ENCODE measurements at regions of chrX and their contacts with region 1.

Region 1: DNA sequence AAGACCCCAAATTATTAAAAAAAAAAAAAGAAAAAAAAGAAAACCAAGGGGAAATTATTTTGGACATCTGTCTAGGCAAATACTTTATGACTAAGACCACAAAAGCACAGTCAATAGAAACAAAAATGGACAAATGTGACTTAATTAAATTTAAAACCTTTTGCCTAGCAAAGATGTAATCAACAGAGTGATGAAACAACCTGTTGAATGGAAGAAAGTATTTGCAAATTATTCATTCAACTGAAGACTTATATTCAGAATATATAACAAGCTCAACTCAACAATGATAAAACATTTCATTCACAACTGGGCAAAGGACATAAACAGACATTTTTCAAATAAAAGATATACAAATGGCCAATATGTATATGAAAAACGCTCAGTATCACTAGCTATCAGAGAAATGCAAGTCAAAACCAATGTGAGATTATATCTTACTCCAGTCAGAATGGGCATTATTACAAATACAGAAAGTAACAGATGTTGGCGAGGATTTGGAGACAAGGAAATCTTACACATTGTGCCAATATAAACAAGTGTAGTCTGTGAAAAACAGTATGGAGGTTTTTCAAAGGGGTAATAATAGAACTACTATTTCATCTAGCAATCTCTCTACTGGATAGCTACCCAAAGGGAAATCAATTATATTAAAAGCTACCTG is 67.1 kb downstream of the FAAH2 start:
- DNase-seq: no peak
- H3K4me3 ChIP-seq: no peak overlapping the region
- H3K27ac ChIP-seq: no peak overlapping the region
- H3K4me1 ChIP-seq: no peaks in the 10 kb centered on the region
- H3K27me3 ChIP-seq: no peaks in the 10 kb centered on the region
- CTCF ChIP-seq: no peak
- EP300 ChIP-seq: no peak
- POLR2A ChIP-seq: no peak

Region 2: DNA sequence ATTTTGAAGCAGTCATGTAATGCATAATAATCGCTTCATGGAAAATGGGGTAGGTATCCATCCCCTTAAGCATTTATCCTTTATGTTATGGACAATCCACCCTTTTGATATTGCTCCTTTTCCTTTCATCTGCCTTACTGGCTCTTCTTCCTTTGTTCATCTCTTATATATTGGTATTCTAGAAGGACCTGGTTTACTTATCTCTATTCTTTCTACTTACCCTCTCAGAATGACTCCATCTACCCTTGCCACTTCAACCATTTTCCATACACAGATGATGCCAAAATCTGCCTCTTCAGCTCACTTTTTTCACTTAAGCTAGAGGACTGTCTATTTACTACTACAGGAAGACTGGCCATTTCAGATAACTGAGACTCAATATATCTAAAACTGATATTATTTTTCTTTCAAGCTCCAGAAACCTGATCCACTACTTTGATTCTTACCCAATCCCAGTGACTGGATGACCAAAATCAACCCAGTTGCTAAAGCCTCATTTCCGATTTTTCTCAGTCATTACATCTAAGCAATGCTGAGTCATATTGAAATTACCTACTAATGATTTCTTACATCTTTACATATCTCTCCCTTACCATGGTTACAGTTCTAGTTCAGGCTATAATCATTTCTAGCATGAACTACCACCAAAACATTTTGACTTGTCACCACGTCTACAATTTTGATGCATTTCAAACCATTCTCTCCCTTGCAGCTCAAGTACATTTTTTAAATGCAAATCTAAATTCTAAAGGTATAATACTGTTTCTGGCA is 26.6 kb after region 1 on chrX:
- intact Hi-C with region 1: no loop called
- DNase-seq: no peak
- H3K4me3 ChIP-seq: no peak overlapping the region
- H3K27ac ChIP-seq: no peak overlapping the region
- H3K4me1 ChIP-seq: no peaks in the 10 kb centered on the region
- H3K27me3 ChIP-seq: no peaks in the 10 kb centered on the region
- CTCF ChIP-seq: no peak
- EP300 ChIP-seq: no peak
- POLR2A ChIP-seq: no peak

Region 3: DNA sequence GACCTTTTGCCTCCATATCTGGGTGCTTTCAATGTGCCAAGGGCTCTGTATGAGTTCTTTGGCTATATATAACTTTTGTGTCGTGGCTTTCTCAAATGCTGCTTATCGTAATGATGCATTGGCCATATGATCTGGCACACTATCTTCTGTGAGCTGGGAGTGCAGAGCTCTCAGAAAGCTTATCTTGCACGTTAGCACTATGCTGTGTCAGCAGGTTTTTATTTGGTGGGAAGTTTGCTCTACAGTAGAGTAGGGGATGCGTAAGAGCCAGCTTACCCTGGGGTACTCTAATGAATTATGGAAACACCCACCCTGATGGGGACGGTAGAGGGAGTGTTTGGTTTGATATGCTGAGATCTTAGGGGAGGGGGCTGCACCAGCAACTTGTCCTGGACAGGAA is 52.5 kb after region 1 on chrX:
- intact Hi-C with region 1: loop called in 1 of 4 experiments (anchors 10 kb)
- DNase-seq: no peak
- H3K4me3 ChIP-seq: no peak overlapping the region
- H3K27ac ChIP-seq: no peak overlapping the region
- H3K4me1 ChIP-seq: no peaks in the 10 kb centered on the region
- H3K27me3 ChIP-seq: no peaks in the 10 kb centered on the region
- CTCF ChIP-seq: no peak
- EP300 ChIP-seq: no peak
- POLR2A ChIP-seq: no peak

Region 4: GRCh38 chrX:57565198-57565597 is 211.6 kb after region 1 on chrX:
- intact Hi-C with region 1: no loop called
- DNase-seq: no peak
- H3K4me3 ChIP-seq: no peak overlapping the region
- H3K27ac ChIP-seq: no peak overlapping the region
- H3K4me1 ChIP-seq: no peaks in the 10 kb centered on the region
- H3K27me3 ChIP-seq: no peaks in the 10 kb centered on the region
- CTCF ChIP-seq: no peak
- EP300 ChIP-seq: no peak
- POLR2A ChIP-seq: no peak

Measured in ovary (tissue), 10 donors.